Tibial artery (tissue), 4 donors: ENCODE measurements at regions of chr5 and their contacts with region 1.

Region 1: DNA sequence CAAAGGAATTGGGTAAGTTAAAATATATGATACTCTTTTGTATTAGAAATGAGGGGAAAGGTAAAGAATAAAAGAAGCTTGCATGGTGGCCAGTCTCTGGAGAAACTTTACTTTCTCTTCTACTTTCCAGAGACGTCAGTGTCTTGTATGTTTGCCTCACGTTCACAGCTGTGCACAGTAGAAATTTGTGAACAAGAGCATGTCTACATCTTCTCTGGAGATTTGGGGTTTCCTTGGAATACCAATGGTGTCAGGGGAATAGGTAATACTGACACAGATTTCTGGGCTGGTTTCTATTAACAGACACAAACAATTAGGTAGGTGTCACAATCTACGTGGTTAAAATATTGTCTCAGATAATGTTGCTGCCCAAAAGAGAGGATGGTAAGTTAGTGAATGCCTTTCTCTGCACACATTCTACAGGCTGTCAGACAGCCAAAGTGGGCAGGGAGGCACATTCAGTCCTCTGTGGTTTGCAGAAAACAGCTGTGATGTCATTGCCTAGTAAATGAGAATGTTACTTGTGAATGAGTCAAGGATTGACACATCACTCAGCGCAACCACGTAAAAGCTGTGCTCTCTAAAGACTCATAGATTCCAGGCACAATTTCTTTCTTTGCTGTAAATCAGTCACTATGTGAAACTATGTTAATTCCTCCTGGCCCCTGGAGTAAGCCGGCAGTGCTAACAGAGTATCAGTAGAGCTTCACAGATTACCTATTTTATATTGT is 397.1 kb downstream of the MAN2A1 start:
- DNase-seq: peak; percentile 48 to 82
- H3K4me3 ChIP-seq: no peak overlapping the region
- H3K27ac ChIP-seq: no peak overlapping the region
- H3K4me1 ChIP-seq: peaks cover 0 to 52% (median 13%) of the 10 kb centered on the region in 4 donors
- H3K27me3 ChIP-seq: no peaks in the 10 kb centered on the region
- CTCF ChIP-seq: no peak

Region 2: GRCh38 chr5:110001648-110002047 is 85.2 kb before region 1 on chr5:
- intact Hi-C with region 1: loop called (anchors 5 kb)
- DNase-seq: no peak
- H3K4me3 ChIP-seq: no peak overlapping the region
- H3K27ac ChIP-seq: peak overlapping the region; percentile 66 to 76
- H3K4me1 ChIP-seq: peaks cover 4 to 67% (median 42%) of the 10 kb centered on the region in 4 donors
- H3K27me3 ChIP-seq: no peaks in the 10 kb centered on the region
- CTCF ChIP-seq: no peak